Activated CD4-positive, alpha-beta T cell treated with anti-CD3 and anti-CD28 coated beads, Interleukin-2, amount 10 ng/mL, durations not matched to agents 24 days and 14 days (primary cell): ENCODE measurements at regions of chr4 and their contacts with region 1.

Region 1: DNA sequence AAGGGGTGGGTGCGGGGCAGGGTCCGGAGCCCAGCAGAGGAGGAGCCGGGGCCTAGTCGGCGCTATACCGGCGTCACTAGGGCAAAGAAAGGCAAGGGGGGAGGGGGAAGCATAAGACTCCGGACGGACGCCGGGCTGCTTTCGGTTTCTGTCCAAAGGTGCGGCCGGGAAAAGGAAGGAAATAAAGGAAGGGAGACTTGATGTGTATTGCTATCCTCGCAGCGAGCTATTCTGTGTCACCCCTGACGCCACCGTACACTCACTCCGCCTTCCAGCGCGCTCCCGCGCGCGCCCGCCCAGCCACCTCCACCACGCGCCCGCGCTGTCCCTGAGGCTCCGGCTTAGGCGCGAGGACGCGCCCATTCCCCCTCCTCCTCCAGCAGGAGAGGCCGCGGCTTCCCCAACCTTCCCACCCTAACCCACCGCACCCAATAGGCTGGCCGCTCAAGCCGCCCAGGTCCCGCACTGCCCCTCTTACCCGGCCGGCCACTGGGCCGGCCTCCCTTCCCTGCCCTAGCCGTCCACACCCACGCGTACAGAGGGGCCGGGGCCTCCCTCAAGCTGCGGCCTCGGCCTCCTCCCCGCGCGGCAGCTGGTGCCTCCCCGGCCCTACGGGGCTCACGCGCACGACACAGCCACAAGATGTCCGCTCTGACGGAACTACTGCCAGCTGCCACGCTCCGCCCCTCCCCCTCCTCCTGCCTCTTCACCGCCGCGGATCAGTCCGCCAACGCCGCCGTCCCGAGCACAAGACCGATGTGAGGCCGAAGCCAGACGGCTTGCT is at the start of gene UBE2D3:
- DNase-seq: peak; percentile 98
- H3K4me3 Mint-ChIP-seq: no peak within 1 kb of the TSS
- H3K27ac Mint-ChIP-seq: no peak within 1 kb of the TSS
- H3K4me1 Mint-ChIP-seq: peaks cover 31% of the 10 kb centered on the region
- H3K27me3 Mint-ChIP-seq: no peaks in the 10 kb centered on the region
- total RNA-seq, gene UBE2D3: 488 TPM in 2 replicates

Region 2: DNA sequence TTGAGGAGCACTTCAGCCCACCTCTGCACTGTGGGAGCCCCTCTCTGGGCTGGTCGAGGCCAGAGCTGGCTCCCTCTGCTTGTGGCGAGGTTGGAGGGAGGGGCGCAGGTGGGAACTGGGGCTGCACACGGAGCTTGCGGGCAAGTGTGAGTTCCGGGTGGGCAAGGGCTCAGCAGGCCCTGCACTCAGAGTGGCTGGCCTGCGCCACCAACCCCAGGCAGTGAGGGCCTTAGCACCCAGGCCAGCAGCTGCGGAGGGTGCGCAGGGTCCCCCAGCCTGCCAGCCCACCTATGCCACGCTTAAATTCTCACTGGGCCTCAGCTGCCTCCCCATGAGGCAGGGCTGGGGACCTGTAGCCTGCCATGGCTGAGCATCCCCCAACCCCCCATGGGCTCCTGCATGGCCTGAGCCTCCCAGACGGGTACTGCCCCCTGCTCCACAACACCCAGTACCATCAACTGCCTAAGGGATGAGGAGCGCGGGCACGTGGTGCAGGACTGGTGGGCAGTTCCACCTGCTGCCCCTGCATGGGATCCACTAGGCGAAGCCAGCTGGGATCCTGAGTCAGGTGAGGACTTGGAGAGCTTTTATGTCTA is 592.7 kb before region 1 on chr4:
- intact Hi-C with region 1: no loop called
- DNase-seq: no peak
- H3K4me3 Mint-ChIP-seq: no peak overlapping the region
- H3K27ac Mint-ChIP-seq: no peak overlapping the region
- H3K4me1 Mint-ChIP-seq: no peaks in the 10 kb centered on the region
- H3K27me3 Mint-ChIP-seq: no peaks in the 10 kb centered on the region

Region 3: DNA sequence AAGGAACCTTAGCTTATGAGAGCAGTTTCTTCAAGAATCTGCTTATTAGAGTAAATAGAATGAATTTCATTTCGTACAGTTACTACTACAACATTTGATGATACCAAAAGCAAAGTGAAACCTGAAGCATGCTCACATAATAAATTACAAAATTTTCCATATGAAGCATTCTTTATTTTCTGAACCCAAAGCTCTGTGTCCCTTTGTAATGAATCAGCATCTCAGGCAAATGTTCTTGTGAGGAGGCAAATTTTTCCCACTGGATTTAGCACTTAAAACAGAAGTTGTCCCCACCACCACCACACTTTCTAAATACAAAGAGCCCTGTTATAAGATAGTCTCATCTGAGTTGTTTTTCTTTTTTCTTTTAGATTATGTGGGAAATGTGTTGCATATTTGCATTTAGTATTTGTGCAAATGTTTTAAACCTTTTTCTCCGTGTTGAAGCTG is 396.6 kb before region 1 on chr4:
- intact Hi-C with region 1: loop called (anchors 5 kb)
- DNase-seq: peak; percentile 54
- H3K4me3 Mint-ChIP-seq: peak overlapping the region; percentile 90
- H3K27ac Mint-ChIP-seq: peak overlapping the region; percentile 88
- H3K4me1 Mint-ChIP-seq: peaks cover 14% of the 10 kb centered on the region
- H3K27me3 Mint-ChIP-seq: peaks cover 8% of the 10 kb centered on the region

Region 4: GRCh38 chr4:102620697-102621497 is 206.2 kb before region 1 on chr4:
- intact Hi-C with region 1: loop called (anchors 5 kb)
- DNase-seq: no peak
- H3K4me3 Mint-ChIP-seq: no peak overlapping the region
- H3K27ac Mint-ChIP-seq: peak overlapping the region; percentile 62
- H3K4me1 Mint-ChIP-seq: peaks cover 53% of the 10 kb centered on the region
- H3K27me3 Mint-ChIP-seq: no peaks in the 10 kb centered on the region

Region 5: GRCh38 chr4:102868781-102869568 is 41.9 kb after region 1 on chr4 and contains the start of gene CISD2:
- intact Hi-C with region 1: loop called (anchors 1 kb)
- DNase-seq: peak; percentile 98
- H3K4me3 Mint-ChIP-seq: peak within 1 kb of the TSS; percentile 93
- H3K27ac Mint-ChIP-seq: peak within 1 kb of the TSS; percentile 99
- H3K4me1 Mint-ChIP-seq: peaks cover 56% of the 10 kb centered on the region
- H3K27me3 Mint-ChIP-seq: no peaks in the 10 kb centered on the region
- total RNA-seq, gene CISD2: 43.9 and 48.5 TPM in 2 replicates

Region 6: GRCh38 chr4:103075901-103076739 is 249.0 kb after region 1 on chr4:
- intact Hi-C with region 1: loop called (anchors 1 kb)
- DNase-seq: peak; percentile 90
- H3K4me3 Mint-ChIP-seq: peak overlapping the region; percentile 88
- H3K27ac Mint-ChIP-seq: peak overlapping the region; percentile 96
- H3K4me1 Mint-ChIP-seq: peaks cover 37% of the 10 kb centered on the region
- H3K27me3 Mint-ChIP-seq: no peaks in the 10 kb centered on the region

Region 7: DNA sequence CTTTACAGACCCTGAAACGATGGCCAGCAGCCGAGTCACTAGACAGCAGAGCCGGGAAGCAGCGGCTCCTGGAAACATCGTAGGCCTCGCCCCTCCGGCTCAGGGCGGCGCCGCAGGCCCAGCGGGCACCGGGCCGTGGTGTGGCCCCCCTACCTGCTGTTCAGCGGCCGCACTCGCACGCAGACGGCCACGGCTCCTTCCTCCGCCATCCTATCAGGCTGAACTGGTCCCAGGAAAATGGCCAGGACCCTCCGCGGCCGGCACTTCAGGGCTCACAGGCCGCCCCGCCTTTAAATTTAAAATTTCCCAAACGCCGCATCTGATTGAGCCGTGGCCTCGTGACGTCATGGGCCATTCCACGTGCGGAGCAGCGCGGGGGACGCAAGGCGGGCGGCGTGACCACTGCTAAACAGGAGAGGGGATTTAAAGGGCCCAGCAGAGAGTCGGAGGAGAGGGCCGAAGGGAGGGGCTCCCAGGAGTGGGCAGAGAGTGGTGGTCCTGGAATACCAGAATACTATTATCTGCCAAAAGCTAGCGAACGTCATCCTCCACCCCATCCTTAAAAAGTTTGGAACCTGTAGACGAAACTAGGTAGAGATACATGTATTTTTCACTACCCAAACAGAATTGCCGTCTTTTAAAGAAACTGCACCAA is 371.2 kb after region 1 on chr4 and contains the start of gene CENPE:
- intact Hi-C with region 1: loop called (anchors 1 kb)
- DNase-seq: peak; percentile 97
- H3K4me3 Mint-ChIP-seq: peak within 1 kb of the TSS; percentile 84
- H3K27ac Mint-ChIP-seq: peak within 1 kb of the TSS; percentile 100
- H3K4me1 Mint-ChIP-seq: peaks cover 28% of the 10 kb centered on the region
- H3K27me3 Mint-ChIP-seq: peaks cover 13% of the 10 kb centered on the region
- total RNA-seq, gene CENPE: 24.6 and 29.8 TPM in 2 replicates